ENCODE measurements at regions of chr5 and their contacts with region 1.

Region 1: DNA sequence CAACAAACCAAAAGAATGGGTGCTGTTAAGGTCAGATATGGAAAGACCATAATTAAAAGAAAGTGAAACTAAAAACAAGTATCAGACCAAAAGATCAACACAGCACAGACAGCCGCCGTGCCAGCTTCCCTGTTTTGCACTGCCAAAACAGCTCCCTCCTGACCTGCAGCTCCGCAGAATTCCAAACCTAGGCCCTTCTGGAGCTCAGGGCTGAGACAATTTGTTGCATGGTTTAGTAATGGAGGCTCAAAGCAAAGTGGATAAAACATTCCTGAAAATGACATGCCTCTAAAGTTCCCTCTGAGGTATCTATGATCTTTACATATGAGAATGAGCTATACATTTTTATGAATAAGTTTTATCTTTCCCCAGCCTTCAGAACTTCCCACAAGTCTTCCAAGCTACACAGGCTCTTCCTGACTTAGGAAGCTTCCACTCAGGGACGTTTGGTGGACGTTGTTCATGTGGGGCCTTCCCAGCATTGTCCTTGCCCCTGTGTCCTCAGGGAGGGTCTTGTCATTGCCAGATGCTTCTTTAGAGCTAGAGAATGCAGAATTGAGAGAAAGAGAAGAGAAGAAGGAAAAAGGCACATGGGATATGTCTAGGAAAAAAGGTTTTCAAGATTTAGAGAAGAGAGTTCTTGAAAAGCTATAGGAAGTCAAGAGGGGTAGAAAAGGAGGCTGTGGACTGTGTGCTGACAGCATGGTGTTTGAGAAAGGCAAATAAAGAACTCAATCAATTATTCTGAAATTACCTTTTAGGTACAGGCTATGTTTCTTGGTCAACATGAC is 28.4 kb upstream of the SSBP2 start:
- DNase-seq: peak; percentile 16
- H3K4me3 Mint-ChIP-seq: peak overlapping the region; percentile 38
- H3K27ac Mint-ChIP-seq: peak overlapping the region; percentile 81
- H3K4me1 Mint-ChIP-seq: peaks cover 18% of the 10 kb centered on the region
- H3K27me3 Mint-ChIP-seq: no peaks in the 10 kb centered on the region
- CTCF ChIP-seq: no peak

Region 2: DNA sequence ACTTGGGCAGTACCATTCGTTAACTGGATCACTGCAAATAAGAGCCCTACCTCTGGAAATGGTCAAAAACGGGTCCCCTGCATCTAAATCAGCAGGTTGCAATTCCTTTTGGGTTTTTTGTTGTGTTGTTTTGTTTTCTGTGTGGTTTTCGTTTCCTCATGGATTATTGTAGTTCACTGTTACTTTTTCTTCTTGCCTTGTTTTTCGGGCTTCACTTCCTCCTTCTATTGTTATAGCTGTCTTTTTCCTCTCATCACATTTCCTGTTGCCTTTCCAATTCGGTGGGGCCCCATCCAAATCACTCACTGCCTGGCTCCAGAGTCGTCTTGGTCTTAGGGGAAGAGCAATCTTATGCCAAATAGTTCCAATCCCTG is 19.7 kb before region 1 on chr5:
- CTCF ChIA-PET with region 1: interaction called, 8 read pairs
- POLR2A ChIA-PET with region 1: interaction called, 82 read pairs
- intact Hi-C with region 1: no loop called
- DNase-seq: no peak
- H3K4me3 Mint-ChIP-seq: no peak overlapping the region
- H3K27ac Mint-ChIP-seq: no peak overlapping the region
- H3K4me1 Mint-ChIP-seq: peaks cover 32% of the 10 kb centered on the region
- H3K27me3 Mint-ChIP-seq: no peaks in the 10 kb centered on the region
- CTCF ChIP-seq: no peak

Region 3: GRCh38 chr5:81768667-81769452 is 10.5 kb before region 1 on chr5:
- CTCF ChIA-PET with region 1: interaction called, 4 read pairs
- POLR2A ChIA-PET with region 1: interaction called, 14 read pairs
- intact Hi-C with region 1: no loop called
- DNase-seq: peak; percentile 68
- H3K4me3 Mint-ChIP-seq: no peak overlapping the region
- H3K27ac Mint-ChIP-seq: peak overlapping the region; percentile 93
- H3K4me1 Mint-ChIP-seq: peaks cover 19% of the 10 kb centered on the region
- H3K27me3 Mint-ChIP-seq: no peaks in the 10 kb centered on the region
- CTCF ChIP-seq: no peak

Region 4: GRCh38 chr5:82338771-82339373 is 559.6 kb after region 1 on chr5:
- CTCF ChIA-PET with region 1: no interaction called
- POLR2A ChIA-PET with region 1: no interaction called
- intact Hi-C with region 1: no loop called
- DNase-seq: no peak
- H3K4me3 Mint-ChIP-seq: no peak overlapping the region
- H3K27ac Mint-ChIP-seq: no peak overlapping the region
- H3K4me1 Mint-ChIP-seq: no peaks in the 10 kb centered on the region
- H3K27me3 Mint-ChIP-seq: no peaks in the 10 kb centered on the region
- CTCF ChIP-seq: no peak

Measured in MCF 10A (cell line).